CD14-positive monocyte (primary cell): ENCODE measurements at regions of chr17 and their contacts with region 1.

Region 1: GRCh38 chr17:4014148-4014927 is 50.1 kb upstream of the ATP2A3 start:
- DNase-seq: no peak
- H3K4me3 ChIP-seq: no peak overlapping the region
- H3K4me3 Mint-ChIP-seq: no peak overlapping the region
- H3K27ac ChIP-seq: no peak overlapping the region
- H3K27ac Mint-ChIP-seq: peak overlapping the region in 2 of 7 donors; percentile 15 to 70
- H3K4me1 ChIP-seq: no peaks in the 10 kb centered on the region
- H3K4me1 Mint-ChIP-seq: no peaks in the 10 kb centered on the region
- H3K27me3 ChIP-seq: no peaks in the 10 kb centered on the region
- H3K27me3 Mint-ChIP-seq: peaks cover 0 to 4% (median 0%) of the 10 kb centered on the region in 3 donors
- CTCF ChIP-seq: no peak

Region 2: DNA sequence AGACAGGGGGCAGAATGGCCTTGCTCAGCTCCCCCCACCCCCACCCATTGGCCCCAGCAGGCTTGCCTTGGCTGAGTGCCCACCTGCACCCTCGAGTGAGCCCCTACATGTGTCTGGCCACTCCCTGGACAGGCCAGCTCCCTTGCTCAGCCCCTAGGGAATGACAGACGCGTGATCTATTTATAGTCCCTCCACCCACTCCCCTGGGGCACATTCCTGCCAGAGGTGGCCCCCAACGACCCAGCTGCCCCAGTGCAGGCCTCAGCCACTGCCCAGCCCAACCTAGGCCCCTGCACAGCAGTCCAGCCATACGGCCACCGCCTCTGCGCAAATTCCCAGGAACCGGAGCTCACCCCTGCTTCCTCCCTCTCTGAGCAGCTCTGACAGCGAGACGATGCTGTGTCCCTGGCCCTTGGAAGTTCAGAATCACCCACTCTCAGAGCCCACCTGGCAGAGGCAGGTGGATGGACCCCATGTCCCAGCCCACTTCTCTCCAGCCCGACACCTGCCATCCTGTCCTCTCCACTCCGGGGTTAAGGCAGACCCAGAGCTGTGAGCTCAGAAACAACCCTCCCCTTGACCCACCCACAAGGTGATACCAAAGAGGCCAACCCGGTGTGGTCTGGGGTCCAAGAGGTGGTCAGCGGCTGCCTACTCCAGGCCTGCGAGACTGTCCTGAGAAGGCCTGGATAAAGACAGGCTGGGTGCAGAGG is 86.6 kb before region 1 on chr17:
- intact Hi-C with region 1: loop called in 1 of 2 experiments (anchors 5 kb)
- DNase-seq: no peak
- H3K4me3 ChIP-seq: no peak overlapping the region
- H3K4me3 Mint-ChIP-seq: no peak overlapping the region
- H3K27ac ChIP-seq: no peak overlapping the region
- H3K27ac Mint-ChIP-seq: peak overlapping the region in 3 of 7 donors; percentile 32 to 57 (median 46)
- H3K4me1 ChIP-seq: no peaks in the 10 kb centered on the region
- H3K4me1 Mint-ChIP-seq: no peaks in the 10 kb centered on the region
- H3K27me3 ChIP-seq: no peaks in the 10 kb centered on the region
- H3K27me3 Mint-ChIP-seq: peaks cover 0 to 3% (median 0%) of the 10 kb centered on the region in 3 donors
- CTCF ChIP-seq: no peak

Region 3: GRCh38 chr17:3990386-3991127 is 23.8 kb before region 1 on chr17:
- intact Hi-C with region 1: no loop called
- DNase-seq: no peak
- H3K4me3 ChIP-seq: no peak overlapping the region
- H3K4me3 Mint-ChIP-seq: no peak overlapping the region
- H3K27ac ChIP-seq: no peak overlapping the region
- H3K27ac Mint-ChIP-seq: no peak overlapping the region
- H3K4me1 ChIP-seq: no peaks in the 10 kb centered on the region
- H3K4me1 Mint-ChIP-seq: peaks cover 4% of the 10 kb centered on the region
- H3K27me3 ChIP-seq: no peaks in the 10 kb centered on the region
- H3K27me3 Mint-ChIP-seq: peaks cover 11 to 17% (median 12%) of the 10 kb centered on the region in 3 donors
- CTCF ChIP-seq: no peak

Region 4: DNA sequence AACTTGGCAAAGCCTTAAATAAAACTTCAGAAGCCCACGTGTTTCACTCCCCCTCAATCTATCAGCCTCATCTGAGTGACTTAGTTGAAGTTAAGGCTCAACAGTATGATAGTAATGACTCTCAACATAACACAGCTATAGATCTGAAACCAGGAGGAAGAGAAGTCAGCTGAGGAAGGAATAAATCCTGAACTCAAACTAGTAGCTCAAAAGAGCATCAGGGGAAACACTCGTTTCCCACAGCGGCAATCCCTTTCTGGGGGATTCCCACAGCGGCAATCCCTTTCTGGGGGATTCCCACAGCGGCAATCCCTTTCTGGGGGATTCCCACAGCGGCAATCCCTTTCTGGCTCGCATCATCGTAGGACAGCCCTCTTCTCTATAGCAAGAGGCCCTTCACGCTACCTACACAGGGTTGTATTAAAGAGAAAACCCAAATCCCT is 71.7 kb after region 1 on chr17:
- intact Hi-C with region 1: no loop called
- DNase-seq: peak in 1 of 3 donors; percentile 13
- H3K4me3 ChIP-seq: no peak overlapping the region
- H3K4me3 Mint-ChIP-seq: no peak overlapping the region
- H3K27ac ChIP-seq: peak overlapping the region in 1 of 2 donors; percentile 41
- H3K27ac Mint-ChIP-seq: peak overlapping the region in 3 of 7 donors; percentile 1 to 41 (median 40)
- H3K4me1 ChIP-seq: peaks cover 14 to 17% of the 10 kb centered on the region in 2 donors
- H3K4me1 Mint-ChIP-seq: peaks cover 15% of the 10 kb centered on the region
- H3K27me3 ChIP-seq: no peaks in the 10 kb centered on the region
- H3K27me3 Mint-ChIP-seq: no peaks in the 10 kb centered on the region
- CTCF ChIP-seq: no peak

Region 5: GRCh38 chr17:4195306-4195705 is 181.0 kb after region 1 on chr17:
- intact Hi-C with region 1: no loop called
- DNase-seq: no peak
- H3K4me3 ChIP-seq: no peak overlapping the region
- H3K4me3 Mint-ChIP-seq: no peak overlapping the region
- H3K27ac ChIP-seq: no peak overlapping the region
- H3K27ac Mint-ChIP-seq: no peak overlapping the region
- H3K4me1 ChIP-seq: no peaks in the 10 kb centered on the region
- H3K4me1 Mint-ChIP-seq: no peaks in the 10 kb centered on the region
- H3K27me3 ChIP-seq: no peaks in the 10 kb centered on the region
- H3K27me3 Mint-ChIP-seq: peaks cover 0 to 5% (median 4%) of the 10 kb centered on the region in 3 donors
- CTCF ChIP-seq: no peak